Cardiac septum (tissue), 1 donor: ENCODE measurements at regions of chr18 and their contacts with region 1.

Region 1: GRCh38 chr18:12934454-12935071 is 13.2 kb upstream of the SEH1L start:
- DNase-seq: peak; percentile 90

Region 2: GRCh38 chr18:12726774-12727550 is 207.6 kb before region 1 on chr18:
- intact Hi-C with region 1: loop called (anchors 1 kb)
- DNase-seq: no peak

Region 3: DNA sequence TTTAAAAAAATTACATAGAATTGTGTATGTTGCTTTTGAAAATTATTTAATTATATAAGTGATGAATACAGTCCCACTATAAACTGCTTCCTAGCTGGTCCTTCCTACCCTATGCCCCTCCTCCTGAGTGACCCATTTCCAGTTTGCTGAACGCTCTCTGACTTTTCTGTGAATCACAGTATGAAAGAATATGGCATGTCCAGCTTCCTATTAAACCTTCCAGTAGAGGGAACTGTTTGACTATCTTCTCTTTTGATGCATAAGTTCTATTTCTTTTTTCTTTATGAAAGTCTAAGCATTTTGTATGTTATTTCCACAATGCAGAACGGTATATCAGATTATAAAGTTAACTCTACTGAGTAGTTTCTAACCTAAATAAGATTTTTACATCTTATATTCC is 190.5 kb before region 1 on chr18:
- intact Hi-C with region 1: loop called (anchors 5 kb)
- DNase-seq: no peak

Region 4: GRCh38 chr18:12883684-12884405 is 50.7 kb before region 1 on chr18 and contains the start of gene PTPN2:
- intact Hi-C with region 1: no loop called
- DNase-seq: peak; percentile 96
- total RNA-seq, gene PTPN2: 14.5 TPM